OCI-LY7 (cell line): ENCODE measurements at regions of chr13 and their contacts with region 1.

Region 1: DNA sequence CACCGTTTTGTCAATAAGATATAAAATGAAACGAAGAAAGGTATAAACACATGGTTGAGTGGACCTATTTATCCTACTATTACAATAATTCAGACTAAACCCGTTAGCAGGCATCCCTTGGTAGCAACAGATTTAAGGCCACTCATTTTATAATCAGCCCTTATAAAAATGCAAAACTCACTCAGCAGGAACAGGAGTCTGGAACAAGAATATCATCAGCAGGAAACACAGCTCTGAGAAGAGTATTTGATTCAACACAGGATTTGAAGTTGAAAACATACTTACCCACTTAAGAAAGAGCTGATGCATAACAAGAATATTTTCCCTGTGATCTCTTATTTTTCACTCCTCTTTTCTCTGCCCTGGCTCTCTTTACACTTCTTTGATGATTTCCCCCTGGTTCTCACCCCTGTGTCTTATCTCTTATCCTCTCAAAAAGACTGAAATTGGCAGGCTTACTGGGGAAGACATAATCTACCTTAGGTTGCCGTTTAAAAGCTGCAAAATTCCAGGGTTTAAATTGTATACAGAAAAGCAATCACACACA is 1722.7 kb downstream of the SLITRK5 start:
- DNase-seq: no peak
- H3K4me3 ChIP-seq: no peak overlapping the region
- H3K27ac ChIP-seq: no peak overlapping the region
- H3K4me1 ChIP-seq: no peaks in the 10 kb centered on the region
- CTCF ChIP-seq: no peak

Region 2: GRCh38 chr13:89307278-89307677 is 86.6 kb before region 1 on chr13:
- CTCF ChIA-PET with region 1: no interaction called
- POLR2A ChIA-PET with region 1: no interaction called
- intact Hi-C with region 1: no loop called
- DNase-seq: no peak
- H3K4me3 ChIP-seq: no peak overlapping the region
- H3K27ac ChIP-seq: no peak overlapping the region
- H3K4me1 ChIP-seq: no peaks in the 10 kb centered on the region
- CTCF ChIP-seq: no peak

Region 3: DNA sequence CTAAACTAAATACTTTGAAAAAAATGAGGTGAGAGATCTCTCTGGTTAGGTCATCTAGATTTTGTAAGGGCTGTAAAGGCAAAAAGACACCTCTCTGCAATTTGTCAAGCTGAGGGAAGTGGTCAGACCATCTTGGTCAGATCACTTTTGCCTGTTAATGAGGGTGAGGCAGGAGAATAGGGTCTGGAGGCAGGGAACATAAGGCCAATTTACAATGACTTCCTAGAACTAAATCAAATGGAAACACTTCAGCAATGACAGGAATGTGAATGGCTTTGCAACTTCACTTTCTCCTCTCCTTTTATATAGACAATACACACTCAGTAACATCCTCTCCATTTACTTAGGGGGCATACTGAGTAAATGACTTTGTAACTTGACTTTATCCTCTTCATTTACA is 69.2 kb before region 1 on chr13:
- CTCF ChIA-PET with region 1: no interaction called
- POLR2A ChIA-PET with region 1: no interaction called
- intact Hi-C with region 1: no loop called
- DNase-seq: no peak
- H3K4me3 ChIP-seq: no peak overlapping the region
- H3K27ac ChIP-seq: no peak overlapping the region
- H3K4me1 ChIP-seq: no peaks in the 10 kb centered on the region
- CTCF ChIP-seq: no peak

Region 4: GRCh38 chr13:89375839-89376238 is 18.0 kb before region 1 on chr13:
- CTCF ChIA-PET with region 1: no interaction called
- POLR2A ChIA-PET with region 1: interaction called, 12 read pairs
- intact Hi-C with region 1: no loop called
- DNase-seq: no peak
- H3K4me3 ChIP-seq: no peak overlapping the region
- H3K27ac ChIP-seq: no peak overlapping the region
- H3K4me1 ChIP-seq: no peaks in the 10 kb centered on the region
- CTCF ChIP-seq: no peak

Region 5: GRCh38 chr13:89454681-89455080 is 60.9 kb after region 1 on chr13:
- CTCF ChIA-PET with region 1: no interaction called
- POLR2A ChIA-PET with region 1: no interaction called
- intact Hi-C with region 1: no loop called
- DNase-seq: no peak
- H3K4me3 ChIP-seq: no peak overlapping the region
- H3K27ac ChIP-seq: no peak overlapping the region
- H3K4me1 ChIP-seq: no peaks in the 10 kb centered on the region
- CTCF ChIP-seq: no peak

Region 6: GRCh38 chr13:89783221-89783755 is 389.5 kb after region 1 on chr13:
- CTCF ChIA-PET with region 1: no interaction called
- POLR2A ChIA-PET with region 1: no interaction called
- intact Hi-C with region 1: no loop called
- DNase-seq: no peak
- H3K4me3 ChIP-seq: no peak overlapping the region
- H3K27ac ChIP-seq: no peak overlapping the region
- H3K4me1 ChIP-seq: no peaks in the 10 kb centered on the region
- CTCF ChIP-seq: no peak